OCI-LY7 (cell line): ENCODE measurements at regions of chr17 and their contacts with region 1.

Region 1: DNA sequence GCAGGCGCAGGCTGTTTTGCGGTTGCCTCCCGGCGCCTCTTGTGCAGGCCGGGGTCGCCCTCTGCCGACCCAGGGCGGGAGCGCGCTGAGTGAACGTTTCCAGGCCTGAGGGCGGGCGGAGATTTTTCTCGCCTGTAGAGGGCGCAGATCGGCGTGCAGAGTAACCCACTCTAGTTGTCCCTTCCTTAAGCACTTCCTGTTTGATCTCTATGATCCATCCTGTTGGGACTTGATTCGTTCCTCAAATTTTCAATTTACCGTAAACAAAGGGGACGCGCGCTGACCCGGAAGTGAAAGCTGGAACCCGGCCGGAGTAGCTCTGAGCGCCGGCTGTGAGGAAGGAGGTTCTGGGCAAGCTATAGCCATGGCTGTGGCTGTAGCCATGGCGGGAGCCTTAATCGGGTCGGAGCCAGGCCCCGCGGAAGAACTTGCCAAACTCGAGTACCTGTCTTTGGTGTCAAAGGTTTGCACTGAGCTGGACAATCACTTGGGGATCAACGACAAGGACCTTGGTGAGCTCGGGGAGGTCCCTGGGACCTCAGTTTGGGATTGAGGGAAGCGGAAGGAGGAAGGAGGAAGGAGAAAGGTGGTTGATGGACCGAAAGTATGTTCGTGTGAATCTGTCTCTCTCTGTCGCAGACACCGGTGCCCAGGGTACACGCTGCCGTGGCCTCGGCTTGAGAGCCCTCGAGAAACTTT is at the start of gene DHX8:
- DNase-seq: peak; percentile 98
- H3K4me3 ChIP-seq: peak within 1 kb of the TSS; percentile 79
- H3K27ac ChIP-seq: peak within 1 kb of the TSS; percentile 54
- H3K4me1 ChIP-seq: peaks cover 25% of the 10 kb centered on the region
- CTCF ChIP-seq: peak; percentile 100
- total RNA-seq, gene DHX8: 32.4 and 37.0 TPM in 2 replicates

Region 2: DNA sequence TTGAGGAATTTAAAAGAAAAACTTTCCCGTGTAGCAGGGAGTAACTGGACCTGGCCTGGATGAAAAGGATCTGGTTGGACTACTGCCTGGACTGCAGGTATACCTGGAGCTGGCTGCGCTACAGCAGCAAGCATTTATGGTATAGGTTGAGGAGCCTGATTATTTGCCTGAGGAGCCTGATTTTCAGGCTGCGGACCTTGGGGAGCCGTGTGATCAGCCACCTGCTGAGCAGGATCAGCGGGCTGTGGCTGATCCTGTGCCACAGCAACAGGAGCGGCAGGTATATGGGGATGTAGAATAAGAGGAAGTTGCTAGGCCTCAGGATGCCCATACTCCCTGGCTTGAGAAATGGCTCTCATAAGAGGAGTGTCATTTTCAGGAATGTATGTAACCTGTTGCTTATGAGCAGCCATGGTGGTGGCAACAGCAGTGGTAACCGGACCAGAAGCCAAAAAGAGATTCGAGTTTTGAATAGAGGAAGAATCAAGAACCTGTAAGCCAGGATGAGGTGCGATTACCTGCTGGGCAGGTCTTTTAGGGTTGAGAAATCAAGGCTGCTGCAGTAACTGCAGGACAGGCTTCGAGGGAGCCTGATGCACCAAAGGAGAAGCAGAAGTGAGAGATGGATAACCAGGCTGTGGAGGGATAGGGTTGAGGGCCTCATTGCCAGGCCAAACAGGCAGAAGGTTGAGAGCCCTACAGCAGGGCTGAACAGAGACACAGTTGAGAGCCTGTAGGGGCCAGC is 146.0 kb before region 1 on chr17:
- CTCF ChIA-PET with region 1: no interaction called
- POLR2A ChIA-PET with region 1: no interaction called
- intact Hi-C with region 1: loop called (anchors 2 kb)
- DNase-seq: no peak
- H3K4me3 ChIP-seq: no peak overlapping the region
- H3K27ac ChIP-seq: no peak overlapping the region
- H3K4me1 ChIP-seq: peaks cover 9% of the 10 kb centered on the region
- CTCF ChIP-seq: no peak

Region 3: GRCh38 chr17:43360739-43361505 is 122.9 kb before region 1 on chr17:
- CTCF ChIA-PET with region 1: interaction called, 3 read pairs
- POLR2A ChIA-PET with region 1: interaction called, 12 read pairs
- intact Hi-C with region 1: no loop called
- DNase-seq: peak; percentile 96
- H3K4me3 ChIP-seq: peak overlapping the region; percentile 76
- H3K27ac ChIP-seq: peak overlapping the region; percentile 95
- H3K4me1 ChIP-seq: peaks cover 11% of the 10 kb centered on the region
- CTCF ChIP-seq: no peak

Region 4: DNA sequence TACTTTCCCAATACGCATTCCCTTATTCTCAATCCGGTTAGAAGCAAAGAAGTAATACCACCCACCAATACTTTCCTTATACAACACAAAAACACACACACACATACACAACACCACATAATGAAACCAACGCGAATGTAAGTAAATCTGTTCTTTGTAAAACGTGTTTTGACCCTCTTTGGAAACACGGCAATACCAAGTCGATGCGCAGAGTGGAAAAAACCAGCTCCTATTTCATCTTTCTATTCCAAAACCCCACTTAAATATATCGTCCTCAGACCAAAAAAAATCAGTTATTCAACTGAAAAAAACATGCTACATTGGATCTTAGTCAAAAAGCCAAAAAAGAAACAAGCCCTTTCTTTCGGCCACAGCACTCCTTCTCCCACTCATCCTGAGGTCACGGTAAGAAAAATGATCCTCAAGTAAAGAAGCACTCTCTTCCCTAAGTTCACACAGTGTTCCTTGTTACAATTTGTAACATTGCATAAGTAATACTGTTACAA is 116.0 kb before region 1 on chr17:
- CTCF ChIA-PET with region 1: no interaction called
- POLR2A ChIA-PET with region 1: interaction called, 18 read pairs
- intact Hi-C with region 1: no loop called
- DNase-seq: peak; percentile 89
- H3K4me3 ChIP-seq: peak overlapping the region; percentile 64
- H3K27ac ChIP-seq: peak overlapping the region; percentile 54
- H3K4me1 ChIP-seq: peaks cover 30% of the 10 kb centered on the region
- CTCF ChIP-seq: no peak

Region 5: DNA sequence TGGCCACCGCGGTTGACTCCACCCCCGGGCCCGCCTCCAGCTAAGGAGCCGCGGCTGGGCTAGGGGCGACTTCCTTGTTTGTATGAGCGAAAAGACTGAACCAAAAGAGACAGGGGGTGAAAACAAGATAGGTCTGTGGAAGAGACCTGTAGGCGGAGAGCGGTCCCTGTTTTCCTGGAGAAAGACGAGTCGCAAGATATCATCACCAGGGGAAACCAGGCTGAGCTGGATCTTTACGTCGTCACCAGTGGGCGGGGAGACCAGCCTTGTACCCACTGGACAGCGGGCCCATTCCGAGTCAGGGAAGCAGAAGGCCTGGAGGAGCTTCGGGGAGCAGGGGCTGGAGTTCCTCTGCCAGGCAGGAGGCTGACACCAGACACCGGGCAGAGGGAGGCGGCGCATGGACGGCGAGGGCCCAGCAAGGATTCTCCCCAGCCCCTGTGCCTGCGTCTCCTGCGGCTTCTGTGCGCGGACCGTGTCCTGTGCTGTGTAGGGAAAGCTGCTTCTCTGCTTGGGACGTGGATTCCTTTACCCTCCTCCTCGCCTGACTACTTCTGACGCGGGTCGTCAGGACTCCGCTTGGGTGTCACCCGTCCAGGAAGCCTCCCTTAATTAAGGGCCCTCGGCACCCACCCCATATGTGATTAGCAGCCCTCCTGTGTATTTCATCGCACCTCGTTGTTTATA is 95.3 kb before region 1 on chr17:
- CTCF ChIA-PET with region 1: interaction called, 12 read pairs
- POLR2A ChIA-PET with region 1: interaction called, 8 read pairs
- intact Hi-C with region 1: loop called (anchors 1 kb)
- DNase-seq: peak; percentile 93
- H3K4me3 ChIP-seq: peak overlapping the region; percentile 72
- H3K27ac ChIP-seq: peak overlapping the region; percentile 67
- H3K4me1 ChIP-seq: peaks cover 5% of the 10 kb centered on the region
- CTCF ChIP-seq: no peak

Region 6: DNA sequence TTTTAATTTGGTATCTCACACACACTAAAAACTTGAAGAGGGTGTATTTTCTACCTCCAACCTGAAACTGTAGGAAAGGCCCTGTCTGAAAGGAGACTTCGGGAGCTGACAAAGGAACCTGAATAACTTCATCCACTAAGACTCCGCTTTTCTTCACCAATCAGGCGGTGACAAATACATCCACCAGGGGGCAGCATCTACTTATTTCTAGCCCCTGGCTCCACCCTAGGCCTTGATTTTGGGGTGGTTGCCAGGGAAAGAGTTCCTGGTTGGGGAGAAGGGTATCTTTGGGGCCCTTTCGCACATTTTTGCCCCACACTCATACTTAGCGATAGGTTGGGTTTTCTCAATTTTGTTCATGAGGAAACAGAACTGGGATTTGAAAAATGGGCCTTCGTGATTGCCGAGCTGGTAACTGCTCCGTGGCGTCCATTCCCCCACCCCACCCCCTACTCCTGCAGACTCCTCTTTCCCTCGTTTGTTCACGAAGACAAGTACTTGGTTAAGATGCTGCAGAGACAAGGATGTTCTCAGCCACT is 89.8 kb before region 1 on chr17:
- CTCF ChIA-PET with region 1: interaction called, 12 read pairs
- POLR2A ChIA-PET with region 1: interaction called, 3 read pairs
- intact Hi-C with region 1: loop called (anchors 1 kb)
- DNase-seq: peak; percentile 86
- H3K4me3 ChIP-seq: no peak overlapping the region
- H3K27ac ChIP-seq: no peak overlapping the region
- H3K4me1 ChIP-seq: peaks cover 18% of the 10 kb centered on the region
- CTCF ChIP-seq: peak; percentile 94